Gastrocnemius medialis (tissue), 4 donors: ENCODE measurements at regions of chr9 and their contacts with region 1.

Region 1: GRCh38 chr9:127423934-127424675 is at the start of gene ZNF79:
- DNase-seq: peak; percentile 85 to 93
- ATAC-seq: peak; percentile 92 to 94
- H3K4me3 ChIP-seq: peak within 1 kb of the TSS; percentile 84 to 98 (median 92)
- H3K27ac ChIP-seq: peak within 1 kb of the TSS; percentile 91 to 97 (median 95)
- H3K4me1 ChIP-seq: peaks cover 34 to 36% of the 10 kb centered on the region in 2 donors
- H3K27me3 ChIP-seq: no peaks in the 10 kb centered on the region
- CTCF ChIP-seq: no peak
- POLR2A ChIP-seq: peak; percentile 71 to 79
- total RNA-seq, gene ZNF79: 3.9 to 9.3 (median 6.4) TPM

Region 2: DNA sequence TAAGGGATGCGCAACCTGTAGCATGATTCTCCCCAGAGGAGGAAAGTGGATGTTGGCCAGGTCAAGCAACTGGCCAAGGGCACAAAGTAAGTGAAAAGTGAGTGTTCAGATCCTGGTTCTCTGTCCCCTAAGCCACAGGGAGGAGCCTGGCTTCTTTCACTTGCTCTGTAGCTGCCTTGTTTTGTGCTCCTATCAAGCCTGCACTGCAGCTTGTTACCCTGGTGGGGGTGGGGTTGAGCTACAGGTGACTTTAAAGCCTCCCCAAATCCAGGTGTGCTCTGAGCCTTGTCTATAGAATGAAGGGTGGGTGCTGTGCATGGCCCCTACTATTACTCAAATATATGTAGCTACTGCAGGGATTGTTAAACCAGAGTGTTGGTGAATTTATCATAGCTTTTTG is 476.6 kb before region 1 on chr9:
- in situ Hi-C with region 1: loop called in 1 of 4 experiments (anchors 25 kb)
- intact Hi-C with region 1: no loop called
- DNase-seq: no peak
- ATAC-seq: no peak
- H3K4me3 ChIP-seq: no peak overlapping the region
- H3K27ac ChIP-seq: no peak overlapping the region
- H3K4me1 ChIP-seq: peaks cover 0 to 4% of the 10 kb centered on the region in 2 donors
- H3K27me3 ChIP-seq: no peaks in the 10 kb centered on the region
- CTCF ChIP-seq: no peak
- POLR2A ChIP-seq: no peak

Region 3: GRCh38 chr9:127159325-127159801 is 264.7 kb before region 1 on chr9:
- in situ Hi-C with region 1: no loop called
- intact Hi-C with region 1: no loop called
- DNase-seq: peak; percentile 88 to 92
- ATAC-seq: peak; percentile 93 to 97
- H3K4me3 ChIP-seq: no peak overlapping the region
- H3K27ac ChIP-seq: peak overlapping the region; percentile 62 to 77 (median 72)
- H3K4me1 ChIP-seq: peaks cover 34 to 49% of the 10 kb centered on the region in 2 donors
- H3K27me3 ChIP-seq: no peaks in the 10 kb centered on the region
- CTCF ChIP-seq: peak; percentile 25 to 50 (median 47)
- POLR2A ChIP-seq: peak; percentile 20 to 63

Region 4: DNA sequence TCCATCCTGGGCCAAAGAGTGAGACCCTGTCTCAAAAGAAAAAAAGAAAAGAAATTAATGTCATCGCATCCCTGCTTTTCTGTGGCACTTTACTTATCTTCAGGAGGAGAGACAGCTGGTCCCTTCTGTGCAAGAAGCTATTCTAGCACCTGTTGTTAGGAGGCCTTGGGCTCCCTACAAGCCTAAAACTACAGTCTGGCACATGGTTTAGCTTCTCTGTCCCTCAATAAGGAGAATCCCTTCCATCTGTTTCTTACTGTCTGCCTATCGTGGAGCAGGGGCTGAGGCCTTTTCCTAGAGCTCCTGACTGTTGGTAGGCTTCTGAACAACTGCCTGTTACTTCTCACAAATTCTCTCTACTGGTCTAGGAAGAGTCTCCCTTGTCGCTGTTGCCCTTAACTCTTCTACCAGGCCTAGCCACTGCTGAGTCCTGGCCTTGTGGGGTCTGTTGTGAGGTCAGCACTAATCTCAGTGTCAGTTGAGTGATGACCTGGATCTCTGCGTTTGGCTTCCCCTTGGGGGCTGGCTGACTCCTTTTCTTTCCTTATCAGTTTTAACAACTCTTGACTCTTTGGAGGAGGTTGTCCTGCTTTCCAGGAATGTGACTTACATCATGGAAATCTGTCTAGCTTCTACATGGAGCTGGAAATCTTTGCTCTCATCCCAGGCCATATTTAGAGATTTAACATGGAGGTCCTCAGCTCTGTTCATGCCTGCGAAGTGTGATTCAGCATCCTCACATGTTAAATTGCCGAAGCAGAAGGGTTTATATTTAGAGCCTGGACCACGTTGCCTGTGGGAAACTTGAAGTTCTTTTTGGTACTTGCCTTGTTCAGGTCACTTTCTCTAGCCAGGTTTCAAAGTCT is 165.3 kb before region 1 on chr9:
- in situ Hi-C with region 1: no loop called
- intact Hi-C with region 1: no loop called
- DNase-seq: no peak
- ATAC-seq: no peak
- H3K4me3 ChIP-seq: no peak overlapping the region
- H3K27ac ChIP-seq: peak overlapping the region in 1 of 4 donors; percentile 24
- H3K4me1 ChIP-seq: peaks cover 10 to 11% of the 10 kb centered on the region in 2 donors
- H3K27me3 ChIP-seq: no peaks in the 10 kb centered on the region
- CTCF ChIP-seq: no peak
- POLR2A ChIP-seq: no peak

Region 5: GRCh38 chr9:127473501-127473900 is 49.4 kb after region 1 on chr9:
- in situ Hi-C with region 1: no loop called
- intact Hi-C with region 1: no loop called
- DNase-seq: no peak
- ATAC-seq: no peak
- H3K4me3 ChIP-seq: no peak overlapping the region
- H3K27ac ChIP-seq: no peak overlapping the region
- H3K4me1 ChIP-seq: no peaks in the 10 kb centered on the region
- H3K27me3 ChIP-seq: no peaks in the 10 kb centered on the region
- CTCF ChIP-seq: no peak
- POLR2A ChIP-seq: no peak